Mammary epithelial cell (primary cell): ENCODE measurements at regions of chr6 and their contacts with region 1.

Region 1: DNA sequence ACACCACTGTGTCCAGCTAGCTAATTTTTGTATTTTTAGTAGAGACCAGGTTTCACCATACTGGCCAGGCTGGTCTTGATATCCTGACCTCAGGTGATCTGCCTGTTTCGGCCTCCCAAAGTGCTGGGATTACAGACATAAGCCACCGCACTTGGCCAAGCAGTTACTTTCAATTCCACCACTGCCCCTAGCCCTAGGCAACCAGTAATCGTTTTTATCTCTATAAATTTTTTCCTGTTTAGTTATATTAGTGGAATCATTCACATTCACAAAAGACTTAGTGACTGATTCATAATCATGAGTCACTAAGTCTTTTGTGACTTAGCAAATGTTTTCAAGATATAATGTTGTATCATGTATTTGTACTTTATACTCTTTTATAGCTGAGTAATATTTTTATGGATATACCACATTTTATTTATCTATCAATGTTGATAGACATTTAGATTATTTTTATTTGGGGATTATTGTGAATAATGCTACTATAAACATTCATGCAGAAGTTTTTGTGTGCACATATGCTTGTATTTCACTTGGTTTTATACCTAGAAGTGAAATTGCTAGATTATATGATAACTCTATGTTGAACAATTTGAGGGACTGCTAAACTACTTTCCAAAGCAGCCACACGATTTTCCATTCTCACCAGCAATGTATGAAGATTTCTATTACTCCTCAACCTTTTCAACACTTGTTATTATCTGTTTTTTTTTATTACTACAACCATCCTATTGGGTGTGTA is 421.4 kb upstream of the ID4 start:
- DNase-seq: peak; percentile 82
- H3K4me3 ChIP-seq: no peak overlapping the region
- H3K27ac ChIP-seq: peak overlapping the region; percentile 81
- H3K4me1 ChIP-seq: peaks cover 61% of the 10 kb centered on the region
- H3K27me3 ChIP-seq: no peaks in the 10 kb centered on the region
- CTCF ChIP-seq: no peak

Region 2: GRCh38 chr6:19472847-19473246 is 57.1 kb after region 1 on chr6:
- CTCF ChIA-PET with region 1: no interaction called
- dilution Hi-C with region 1: no loop called
- in situ Hi-C with region 1: no loop called
- intact Hi-C with region 1: loop called (anchors 5 kb)
- DNase-seq: no peak
- H3K4me3 ChIP-seq: no peak overlapping the region
- H3K27ac ChIP-seq: no peak overlapping the region
- H3K4me1 ChIP-seq: peaks cover 3% of the 10 kb centered on the region
- H3K27me3 ChIP-seq: no peaks in the 10 kb centered on the region
- CTCF ChIP-seq: peak; percentile 67 to 68